HepG2 (cell line): ENCODE measurements at regions of chr3 and their contacts with region 1.

Region 1: GRCh38 chr3:192917404-192918274 is at the start of gene MB21D2:
- DNase-seq: peak; percentile 47
- ATAC-seq: peak; percentile 80
- H3K4me3 ChIP-seq: peak within 1 kb of the TSS; percentile 82 to 94 (median 89)
- H3K27ac ChIP-seq: no peak within 1 kb of the TSS
- H3K4me1 ChIP-seq: peaks cover 16% of the 10 kb centered on the region
- H3K27me3 ChIP-seq: peaks cover 0 to 28% of the 10 kb centered on the region in 2 experiments; a peak in 2 of 5 replicates
- CTCF ChIP-seq: no peak
- EP300 ChIP-seq: no peak
- POLR2A ChIP-seq: peak; percentile 19 to 35; a peak in 1 of 4 replicates
- RAD21 ChIP-seq: no peak
- total RNA-seq, gene MB21D2: 1.6 and 2.8 TPM in 2 replicates

Region 2: GRCh38 chr3:192816351-192816750 is 101.3 kb before region 1 on chr3:
- CTCF ChIA-PET with region 1: interaction called, 3 read pairs
- POLR2A ChIA-PET with region 1: no interaction called
- in situ Hi-C with region 1: no loop called
- intact Hi-C with region 1: loop called (anchors 2 kb)
- DNase-seq: peak; percentile 49
- ATAC-seq: no peak
- H3K4me3 ChIP-seq: no peak overlapping the region
- H3K27ac ChIP-seq: no peak overlapping the region
- H3K4me1 ChIP-seq: no peaks in the 10 kb centered on the region
- H3K27me3 ChIP-seq: no peaks in the 10 kb centered on the region
- CTCF ChIP-seq: peak; percentile 68
- EP300 ChIP-seq: no peak
- POLR2A ChIP-seq: no peak
- RAD21 ChIP-seq: no peak; the same call in 1 of the 2 replicates

Region 3: DNA sequence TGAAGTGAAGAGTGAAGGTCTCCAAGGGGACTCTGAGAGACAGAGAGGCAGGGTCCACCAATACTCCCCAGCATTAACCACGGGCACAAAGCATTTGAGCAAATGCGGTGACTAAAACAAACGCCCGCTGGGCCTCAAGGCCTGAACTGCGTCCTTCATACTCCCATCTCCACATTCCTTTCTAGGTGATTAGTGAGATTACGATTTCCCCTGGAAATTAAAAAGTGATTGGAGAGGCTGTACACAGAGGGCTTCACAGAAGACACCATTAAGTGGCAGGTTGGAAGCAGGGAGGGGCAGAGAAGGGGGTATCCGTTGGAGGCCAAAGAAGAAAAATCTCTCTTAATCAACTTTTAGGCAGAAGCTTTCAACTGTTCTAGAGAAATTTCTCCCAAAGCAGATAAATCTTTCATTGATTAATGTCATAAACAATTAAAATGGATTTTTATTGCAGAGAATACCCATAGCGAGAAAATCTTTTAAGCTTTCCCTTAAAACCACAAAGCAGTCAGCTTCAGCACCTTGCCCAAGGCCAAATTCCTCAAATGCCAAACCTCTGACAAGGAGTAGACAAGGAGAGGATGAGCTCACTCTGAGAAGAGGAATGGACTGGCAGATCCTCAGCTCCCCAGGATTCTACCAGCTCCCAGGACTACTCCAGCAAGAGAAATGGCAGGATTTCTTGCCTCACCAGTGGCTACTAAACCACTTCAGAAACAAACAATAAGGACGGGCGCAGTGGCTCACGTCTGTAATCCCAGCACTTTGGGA is 38.1 kb before region 1 on chr3:
- CTCF ChIA-PET with region 1: no interaction called
- POLR2A ChIA-PET with region 1: interaction called, 7 read pairs
- in situ Hi-C with region 1: no loop called
- intact Hi-C with region 1: loop called (anchors 5 kb)
- DNase-seq: peak; percentile 83
- ATAC-seq: peak; percentile 82
- H3K4me3 ChIP-seq: peak overlapping the region in 2 of 3 experiments; percentile 8 to 43; a peak in 2 of 6 replicates
- H3K27ac ChIP-seq: peak overlapping the region; percentile 37
- H3K4me1 ChIP-seq: peaks cover 56% of the 10 kb centered on the region
- H3K27me3 ChIP-seq: no peaks in the 10 kb centered on the region
- CTCF ChIP-seq: no peak
- EP300 ChIP-seq: no peak
- POLR2A ChIP-seq: no peak
- RAD21 ChIP-seq: no peak

Region 4: GRCh38 chr3:192892981-192893700 is 24.5 kb before region 1 on chr3:
- CTCF ChIA-PET with region 1: no interaction called
- POLR2A ChIA-PET with region 1: interaction called, 25 read pairs
- in situ Hi-C with region 1: no loop called
- intact Hi-C with region 1: loop called (anchors 1 kb)
- DNase-seq: no peak
- ATAC-seq: no peak
- H3K4me3 ChIP-seq: no peak overlapping the region
- H3K27ac ChIP-seq: no peak overlapping the region
- H3K4me1 ChIP-seq: peaks cover 67% of the 10 kb centered on the region
- H3K27me3 ChIP-seq: no peaks in the 10 kb centered on the region
- CTCF ChIP-seq: no peak
- EP300 ChIP-seq: no peak
- POLR2A ChIP-seq: no peak
- RAD21 ChIP-seq: no peak

Region 5: DNA sequence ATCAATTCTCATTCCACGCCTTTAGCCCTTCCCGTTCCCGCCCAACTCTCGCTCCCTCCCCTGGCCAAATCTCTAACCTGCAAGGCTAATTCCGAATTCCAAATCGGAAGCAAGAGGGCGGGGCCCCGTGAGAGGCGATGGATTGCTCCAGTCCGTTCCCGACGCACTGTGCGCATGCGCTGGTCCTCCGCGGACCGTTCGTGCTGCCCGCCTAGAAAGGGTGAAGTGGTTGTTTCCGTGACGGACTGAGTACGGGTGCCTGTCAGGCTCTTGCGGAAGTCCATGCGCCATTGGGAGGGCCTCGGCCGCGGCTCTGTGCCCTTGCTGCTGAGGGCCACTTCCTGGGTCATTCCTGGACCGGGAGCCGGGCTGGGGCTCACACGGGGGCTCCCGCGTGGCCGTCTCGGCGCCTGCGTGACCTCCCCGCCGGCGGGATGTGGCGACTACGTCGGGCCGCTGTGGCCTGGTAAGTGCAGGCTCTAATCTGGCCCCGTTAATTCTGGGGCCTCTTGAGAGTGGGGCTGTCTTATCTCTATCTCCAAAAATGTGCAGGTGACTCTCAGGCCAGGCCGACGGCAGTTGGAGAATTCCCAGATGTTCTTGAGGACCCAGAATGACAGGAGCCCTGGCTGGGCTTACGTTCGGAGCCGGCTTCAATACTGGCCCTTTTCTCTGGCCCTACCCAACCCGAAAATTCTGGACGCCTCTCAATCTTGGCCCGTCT is 675.5 kb after region 1 on chr3 and contains the start of gene OPA1:
- CTCF ChIA-PET with region 1: no interaction called
- POLR2A ChIA-PET with region 1: no interaction called
- in situ Hi-C with region 1: loop called (anchors 25 kb)
- intact Hi-C with region 1: no loop called
- DNase-seq: peak; percentile 98
- ATAC-seq: peak; percentile 99
- H3K4me3 ChIP-seq: peak within 1 kb of the TSS; percentile 62 to 94 (median 92)
- H3K27ac ChIP-seq: peak within 1 kb of the TSS; percentile 86
- H3K4me1 ChIP-seq: peaks cover 39% of the 10 kb centered on the region
- H3K27me3 ChIP-seq: peaks cover 0 to 5% of the 10 kb centered on the region in 2 experiments; a peak in 1 of 5 replicates
- CTCF ChIP-seq: peak; percentile 56
- EP300 ChIP-seq: peak in 1 of 2 experiments; percentile 65; a peak in 2 of 4 replicates
- POLR2A ChIP-seq: peak; percentile 76 to 92
- RAD21 ChIP-seq: peak; percentile 54
- total RNA-seq, gene OPA1: 78.5 and 126 TPM in 2 replicates